ENCODE measurements at regions of chr12 and their contacts with region 1.

Region 1: GRCh38 chr12:103578926-103579325 is 8.1 kb upstream of the STAB2 start:
- DNase-seq: no peak
- ATAC-seq: no peak
- H3K4me3 ChIP-seq: no peak overlapping the region
- H3K4me3 Mint-ChIP-seq: no peak overlapping the region
- H3K27ac ChIP-seq: no peak overlapping the region
- H3K27ac Mint-ChIP-seq: no peak overlapping the region
- H3K4me1 ChIP-seq: no peaks in the 10 kb centered on the region
- H3K4me1 Mint-ChIP-seq: no peaks in the 10 kb centered on the region
- H3K27me3 ChIP-seq: peaks cover 2 to 23% of the 10 kb centered on the region in 2 experiments
- H3K27me3 Mint-ChIP-seq: peaks cover 50% of the 10 kb centered on the region
- CTCF ChIP-seq: no peak

Region 2: DNA sequence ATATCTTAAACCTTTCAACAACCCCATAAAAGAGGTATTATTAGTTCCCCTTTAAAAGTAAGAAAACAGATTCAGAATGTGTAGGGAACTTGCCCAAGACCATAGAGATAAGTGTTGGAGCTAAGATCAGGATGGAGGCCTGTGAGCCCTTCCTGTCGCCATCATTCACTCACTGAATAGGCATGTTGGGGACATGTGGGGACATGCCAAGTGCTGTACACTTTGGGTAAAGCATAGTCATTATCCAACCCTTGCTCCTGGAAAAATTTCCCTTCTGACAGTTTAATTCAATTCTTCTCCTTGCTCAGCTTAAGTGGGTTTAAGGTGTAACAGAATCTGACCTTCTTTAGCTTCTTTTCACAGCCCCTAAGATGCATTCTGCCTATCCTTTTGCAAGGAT is 55.2 kb before region 1 on chr12:
- CTCF ChIA-PET with region 1: no interaction called
- POLR2A ChIA-PET with region 1: no interaction called
- intact Hi-C with region 1: no loop called
- DNase-seq: no peak
- ATAC-seq: no peak
- H3K4me3 ChIP-seq: no peak overlapping the region
- H3K4me3 Mint-ChIP-seq: no peak overlapping the region
- H3K27ac ChIP-seq: no peak overlapping the region
- H3K27ac Mint-ChIP-seq: no peak overlapping the region
- H3K4me1 ChIP-seq: no peaks in the 10 kb centered on the region
- H3K4me1 Mint-ChIP-seq: no peaks in the 10 kb centered on the region
- H3K27me3 ChIP-seq: no peaks in the 10 kb centered on the region
- H3K27me3 Mint-ChIP-seq: peaks cover 5% of the 10 kb centered on the region
- CTCF ChIP-seq: no peak

Region 3: GRCh38 chr12:103868215-103868614 is 289.3 kb after region 1 on chr12:
- CTCF ChIA-PET with region 1: no interaction called
- POLR2A ChIA-PET with region 1: no interaction called
- intact Hi-C with region 1: loop called (anchors 5 kb)
- DNase-seq: no peak
- ATAC-seq: no peak
- H3K4me3 ChIP-seq: no peak overlapping the region
- H3K4me3 Mint-ChIP-seq: no peak overlapping the region
- H3K27ac ChIP-seq: no peak overlapping the region
- H3K27ac Mint-ChIP-seq: no peak overlapping the region
- H3K4me1 ChIP-seq: no peaks in the 10 kb centered on the region
- H3K4me1 Mint-ChIP-seq: no peaks in the 10 kb centered on the region
- H3K27me3 ChIP-seq: peaks cover 0 to 5% of the 10 kb centered on the region in 2 experiments
- H3K27me3 Mint-ChIP-seq: no peaks in the 10 kb centered on the region
- CTCF ChIP-seq: no peak

Region 4: GRCh38 chr12:103877934-103878510 is 299.1 kb after region 1 on chr12:
- CTCF ChIA-PET with region 1: no interaction called
- POLR2A ChIA-PET with region 1: no interaction called
- intact Hi-C with region 1: loop called in 1 of 2 experiments (anchors 5 kb)
- DNase-seq: peak; percentile 14 to 80 (median 38)
- ATAC-seq: peak; percentile 76
- H3K4me3 ChIP-seq: no peak overlapping the region
- H3K4me3 Mint-ChIP-seq: no peak overlapping the region
- H3K27ac ChIP-seq: no peak overlapping the region
- H3K27ac Mint-ChIP-seq: no peak overlapping the region
- H3K4me1 ChIP-seq: peaks cover 7% of the 10 kb centered on the region
- H3K4me1 Mint-ChIP-seq: peaks cover 5% of the 10 kb centered on the region
- H3K27me3 ChIP-seq: no peaks in the 10 kb centered on the region
- H3K27me3 Mint-ChIP-seq: no peaks in the 10 kb centered on the region
- CTCF ChIP-seq: peak; percentile 79